Dorsolateral prefrontal cortex (tissue), 120 donors: ENCODE measurements at regions of chr5 and their contacts with region 1.

Region 1: DNA sequence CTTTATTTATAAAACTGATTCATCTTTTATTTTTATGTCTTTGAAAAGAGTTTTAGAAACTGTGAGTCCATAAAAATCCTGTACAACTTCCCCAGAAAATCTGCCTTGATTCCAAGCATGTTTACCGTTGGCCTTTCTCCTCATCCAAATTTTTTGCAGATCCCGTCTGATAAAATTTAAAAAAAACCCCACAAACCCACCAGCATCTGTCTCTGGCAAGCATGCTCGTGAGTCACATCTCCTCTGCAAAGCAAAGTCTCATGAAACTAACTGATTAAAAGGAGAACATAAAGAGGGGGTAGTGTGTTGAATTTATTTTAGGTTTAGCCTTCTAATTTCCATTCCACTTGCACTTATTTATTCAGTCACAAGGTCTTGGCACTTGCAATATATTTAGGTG is 109.4 kb downstream of the MAT2B start:
- DNase-seq: peak in 1 of 10 donors; percentile 22
- H3K4me3 ChIP-seq: no peak overlapping the region
- H3K27ac ChIP-seq: peak overlapping the region in 45 of 59 donors; percentile 22 to 89 (median 74)
- H3K27me3 ChIP-seq: no peaks in the 10 kb centered on the region
- CTCF ChIP-seq: no peak

Region 2: GRCh38 chr5:163988566-163988965 is 373.8 kb after region 1 on chr5:
- intact Hi-C with region 1: loop called in 1 of 2 experiments (anchors 2 kb)
- DNase-seq: no peak
- H3K4me3 ChIP-seq: no peak overlapping the region
- H3K27ac ChIP-seq: peak overlapping the region in 2 of 59 donors; percentile 12 to 32
- H3K27me3 ChIP-seq: peaks cover 0 to 3% (median 0%) of the 10 kb centered on the region in 45 donors
- CTCF ChIP-seq: no peak